K562 (cell line): ENCODE measurements at regions of chr12 and their contacts with region 1.

Region 1: GRCh38 chr12:54658306-54659264 is 10.4 kb upstream of the DCD start:
- DNase-seq: peak; percentile 63 to 68 (median 66)
- ATAC-seq: peak; percentile 98
- H3K4me3 ChIP-seq: no peak overlapping the region
- H3K27ac ChIP-seq: no peak overlapping the region
- H3K4me1 ChIP-seq: no peaks in the 10 kb centered on the region
- H3K27me3 ChIP-seq: peaks cover 13 to 14% of the 10 kb centered on the region in 2 experiments; a peak in 3 of 5 replicates
- CTCF ChIP-seq: peak; percentile 74 to 84 (median 75)
- EP300 ChIP-seq: no peak
- POLR2A ChIP-seq: no peak
- RAD21 ChIP-seq: peak in 1 of 2 experiments; percentile 47; a peak in 2 of 4 replicates

Region 2: GRCh38 chr12:54603173-54603814 is 55.3 kb before region 1 on chr12:
- CTCF ChIA-PET with region 1: no interaction called
- POLR2A ChIA-PET with region 1: interaction called, 3 read pairs
- in situ Hi-C with region 1: no loop called
- intact Hi-C with region 1: loop called (anchors 5 kb)
- DNase-seq: peak; percentile 72 to 79 (median 77)
- ATAC-seq: peak; percentile 98
- H3K4me3 ChIP-seq: no peak overlapping the region
- H3K27ac ChIP-seq: no peak overlapping the region
- H3K4me1 ChIP-seq: no peaks in the 10 kb centered on the region; a peak in 2 of 5 replicates
- H3K27me3 ChIP-seq: peaks cover 0 to 5% of the 10 kb centered on the region in 2 experiments; a peak in 2 of 5 replicates
- CTCF ChIP-seq: peak; percentile 82 to 89 (median 83)
- EP300 ChIP-seq: no peak
- POLR2A ChIP-seq: no peak
- RAD21 ChIP-seq: peak in 1 of 2 experiments; percentile 53; a peak in 2 of 4 replicates

Region 3: GRCh38 chr12:54648265-54648664 is 10.3 kb before region 1 on chr12 and contains the start of gene DCD:
- CTCF ChIA-PET with region 1: no interaction called
- POLR2A ChIA-PET with region 1: no interaction called
- in situ Hi-C with region 1: no loop called
- intact Hi-C with region 1: no loop called
- DNase-seq: no peak
- ATAC-seq: no peak
- H3K4me3 ChIP-seq: no peak within 1 kb of the TSS
- H3K27ac ChIP-seq: no peak within 1 kb of the TSS
- H3K4me1 ChIP-seq: no peaks in the 10 kb centered on the region
- H3K27me3 ChIP-seq: peaks cover 0 to 21% of the 10 kb centered on the region in 2 experiments; a peak in 3 of 5 replicates
- CTCF ChIP-seq: no peak
- EP300 ChIP-seq: no peak
- POLR2A ChIP-seq: no peak
- RAD21 ChIP-seq: no peak
- polyA plus RNA-seq, gene DCD: not detected